Activated CD8-positive, alpha-beta T cell treated with anti-CD3 and anti-CD28 coated beads, Interleukin-2, amount 10 ng/mL, durations not matched to agents 7 days and 5 days (primary cell): ENCODE measurements at regions of chr10 and their contacts with region 1.

Region 1: GRCh38 chr10:22655311-22655981 is 58.9 kb downstream of the PIP4K2A start:
- DNase-seq: peak; percentile 41
- ATAC-seq: peak; percentile 42
- H3K4me3 Mint-ChIP-seq: peak overlapping the region; percentile 64
- H3K27ac Mint-ChIP-seq: peak overlapping the region; percentile 91
- H3K4me1 Mint-ChIP-seq: peaks cover 96% of the 10 kb centered on the region
- H3K27me3 Mint-ChIP-seq: no peaks in the 10 kb centered on the region

Region 2: DNA sequence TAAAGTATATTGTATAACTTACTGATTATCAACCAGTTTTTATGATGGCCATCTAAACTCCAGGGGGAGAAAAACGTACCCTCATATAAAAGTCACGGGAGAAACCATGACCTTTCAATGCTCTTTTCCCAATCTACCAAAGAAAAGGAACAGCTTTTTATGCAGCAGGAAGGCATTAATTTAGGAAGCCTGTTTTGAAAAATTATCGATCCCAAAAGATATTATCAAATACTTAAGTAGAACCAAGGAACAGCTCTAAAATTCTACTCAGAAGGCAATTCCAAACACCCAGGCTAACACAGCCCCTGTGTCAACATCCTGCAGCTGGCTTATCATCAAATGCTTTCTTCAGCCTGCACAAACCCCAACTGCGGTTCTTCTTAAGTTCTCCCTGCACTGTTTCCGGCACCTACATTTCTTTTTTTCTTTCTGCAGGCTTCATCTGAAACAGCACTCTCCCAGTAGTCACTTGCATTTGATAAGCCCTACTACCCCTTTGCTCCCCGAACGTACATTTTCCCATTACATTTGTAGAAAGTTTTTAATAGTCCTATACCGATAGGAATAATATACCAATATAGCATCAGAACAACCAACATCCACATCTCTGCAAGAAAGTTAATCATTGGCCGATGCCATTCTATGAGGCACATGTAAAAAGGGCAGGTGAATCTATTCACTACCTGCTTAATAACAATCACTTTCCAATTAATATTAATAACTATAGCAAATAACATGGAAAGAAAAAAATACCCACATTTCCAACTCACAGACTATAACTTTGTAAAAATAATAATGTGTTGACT is 11.0 kb after region 1 on chr10:
- CTCF ChIA-PET with region 1: interaction called, 10 read pairs
- POLR2A ChIA-PET with region 1: interaction called, 3 read pairs
- DNase-seq: peak; percentile 81
- ATAC-seq: peak; percentile 93
- H3K4me3 Mint-ChIP-seq: peak overlapping the region; percentile 82
- H3K27ac Mint-ChIP-seq: peak overlapping the region; percentile 94
- H3K4me1 Mint-ChIP-seq: peaks cover 84% of the 10 kb centered on the region
- H3K27me3 Mint-ChIP-seq: no peaks in the 10 kb centered on the region